Heart left ventricle (tissue), 16 donors: ENCODE measurements at regions of chr5 and their contacts with region 1.

Region 1: DNA sequence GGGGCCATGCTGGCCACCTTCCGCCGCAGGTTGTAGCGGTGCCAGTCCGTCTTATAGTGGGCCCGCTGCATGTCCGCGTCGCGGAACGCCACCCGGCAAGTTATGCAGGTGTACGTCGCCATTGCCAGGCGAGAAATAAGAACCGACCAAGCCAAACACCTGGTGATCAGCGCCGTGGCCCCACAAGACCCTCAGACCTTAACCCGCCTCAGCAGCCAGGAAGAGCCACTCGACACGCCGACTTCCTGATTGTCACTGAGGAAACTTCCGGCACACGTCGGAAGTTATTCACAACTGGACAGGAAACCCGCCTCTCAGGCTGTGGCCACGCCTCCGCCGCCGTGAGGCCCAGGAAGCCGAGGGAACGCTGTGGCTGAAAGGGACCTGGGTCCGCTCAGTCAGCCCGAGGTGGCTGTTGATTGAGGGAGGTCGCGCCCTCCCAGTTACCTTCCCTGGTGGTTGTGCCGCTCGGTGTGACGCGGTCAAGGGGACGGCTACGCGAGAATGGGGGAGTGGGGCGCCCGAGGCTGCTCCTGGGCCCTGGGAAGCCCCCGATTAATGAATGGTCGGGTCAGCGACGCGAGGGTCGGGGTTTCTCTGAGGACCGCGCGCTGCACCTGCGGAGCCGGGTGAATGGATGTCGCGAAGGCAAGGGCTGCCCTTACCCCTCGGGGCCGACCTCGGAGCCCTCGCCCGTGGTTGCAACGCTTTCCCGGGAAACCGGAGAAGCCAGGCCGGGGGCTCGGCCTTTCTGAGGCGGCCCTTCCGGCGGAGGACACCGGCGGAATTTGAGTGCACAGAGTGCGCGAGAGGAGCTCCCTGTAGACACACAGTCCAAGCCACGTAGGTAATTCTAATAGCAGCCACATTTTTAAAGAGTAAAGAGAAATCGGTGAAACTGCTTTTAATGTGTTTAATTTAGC is at the start of gene ZNF622:
- DNase-seq: peak; percentile 91 to 96 (median 93)
- ATAC-seq: peak; percentile 81 to 93 (median 92)
- H3K4me3 ChIP-seq: peak within 1 kb of the TSS; percentile 81 to 97 (median 90)
- H3K27ac ChIP-seq: peak within 1 kb of the TSS; percentile 86 to 97 (median 92)
- H3K4me1 ChIP-seq: peaks cover 4 to 85% (median 61%) of the 10 kb centered on the region in 12 donors
- H3K27me3 ChIP-seq: no peaks in the 10 kb centered on the region
- CTCF ChIP-seq: no peak
- POLR2A ChIP-seq: peak; percentile 31 to 90
- total RNA-seq, gene ZNF622: 43.7 to 97.3 (median 58.4) TPM

Region 2: DNA sequence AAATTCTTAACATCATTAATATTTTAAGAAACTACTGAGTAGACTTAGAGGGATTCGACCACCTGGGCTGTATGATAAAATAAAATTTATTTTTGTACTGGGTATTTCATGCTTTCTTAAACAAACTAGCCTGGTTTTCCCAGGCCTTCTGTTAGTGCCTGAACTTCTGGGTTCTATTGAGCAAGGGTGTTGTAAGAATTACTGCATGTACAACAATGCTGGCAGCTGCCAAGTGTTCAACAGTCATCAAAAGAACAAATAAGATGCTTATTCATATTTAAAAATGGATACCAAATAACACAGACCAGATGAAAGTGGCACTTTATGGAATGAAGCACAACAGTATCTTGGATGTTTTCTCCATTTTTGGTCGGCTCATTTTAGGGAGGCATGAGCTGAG is 1089.0 kb before region 1 on chr5:
- intact Hi-C with region 1: loop called in 1 of 10 experiments (anchors 5 kb)
- DNase-seq: no peak
- ATAC-seq: no peak
- H3K4me3 ChIP-seq: no peak overlapping the region
- H3K27ac ChIP-seq: no peak overlapping the region
- H3K4me1 ChIP-seq: no peaks in the 10 kb centered on the region
- H3K27me3 ChIP-seq: no peaks in the 10 kb centered on the region
- CTCF ChIP-seq: no peak
- POLR2A ChIP-seq: no peak

Region 3: GRCh38 chr5:16315501-16315900 is 150.3 kb before region 1 on chr5:
- intact Hi-C with region 1: no loop called
- DNase-seq: no peak
- ATAC-seq: no peak
- H3K4me3 ChIP-seq: no peak overlapping the region
- H3K27ac ChIP-seq: no peak overlapping the region
- H3K4me1 ChIP-seq: peaks cover 0 to 4% (median 0%) of the 10 kb centered on the region in 12 donors
- H3K27me3 ChIP-seq: no peaks in the 10 kb centered on the region
- CTCF ChIP-seq: no peak
- POLR2A ChIP-seq: no peak

Region 4: DNA sequence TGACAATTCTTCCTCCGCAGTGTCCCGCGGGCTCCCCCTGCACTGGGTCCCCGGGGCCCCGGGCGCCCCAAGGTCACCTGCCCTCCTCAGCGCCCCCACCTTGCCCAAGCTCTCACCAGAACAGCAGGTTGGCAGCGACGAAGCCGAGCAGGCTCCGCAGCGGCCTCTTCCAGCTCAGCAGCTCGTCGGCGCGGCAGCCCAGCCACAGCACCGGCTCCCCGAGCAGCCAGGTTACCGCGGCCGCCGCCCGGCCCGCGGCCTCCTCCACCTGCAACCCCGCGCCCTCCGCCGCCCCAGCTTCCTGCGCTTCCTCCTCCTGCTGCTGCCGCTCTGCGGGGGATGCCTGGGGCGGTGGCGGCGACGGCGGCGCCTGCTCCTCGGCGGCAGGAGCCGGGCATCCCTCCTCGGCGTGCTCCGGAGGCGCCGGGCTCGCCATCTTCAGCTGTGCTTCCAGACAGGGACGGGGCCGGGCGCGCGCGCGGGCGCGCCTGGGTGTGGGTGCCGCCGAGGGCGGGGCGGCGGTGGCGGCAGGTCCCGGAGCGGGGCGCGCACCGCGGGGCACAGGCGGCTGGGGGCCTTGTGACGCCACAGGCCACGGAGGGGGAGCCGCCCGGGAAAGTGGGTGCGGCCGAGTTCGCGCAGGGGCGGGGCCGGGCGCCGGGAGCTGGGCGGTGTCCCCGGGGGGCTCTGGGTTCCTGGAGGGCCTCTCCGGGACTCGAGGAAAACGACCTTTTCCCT is 150.9 kb after region 1 on chr5 and contains the start of gene RETREG1:
- intact Hi-C with region 1: loop called in 1 of 10 experiments (anchors 5 kb)
- DNase-seq: peak; percentile 67 to 85 (median 79)
- ATAC-seq: peak; percentile 47 to 92 (median 88)
- H3K4me3 ChIP-seq: peak within 1 kb of the TSS; percentile 58 to 94 (median 72)
- H3K27ac ChIP-seq: peak within 1 kb of the TSS; percentile 67 to 91 (median 78)
- H3K4me1 ChIP-seq: peaks cover 0 to 26% (median 6%) of the 10 kb centered on the region in 12 donors
- H3K27me3 ChIP-seq: peaks cover 0 to 7% (median 0%) of the 10 kb centered on the region in 9 donors
- CTCF ChIP-seq: peak in 1 of 12 donors; percentile 3
- POLR2A ChIP-seq: no peak
- total RNA-seq, gene RETREG1: 80.3 to 219 (median 173) TPM